MCF 10A (cell line): ENCODE measurements at regions of chr3 and their contacts with region 1.

Region 1: DNA sequence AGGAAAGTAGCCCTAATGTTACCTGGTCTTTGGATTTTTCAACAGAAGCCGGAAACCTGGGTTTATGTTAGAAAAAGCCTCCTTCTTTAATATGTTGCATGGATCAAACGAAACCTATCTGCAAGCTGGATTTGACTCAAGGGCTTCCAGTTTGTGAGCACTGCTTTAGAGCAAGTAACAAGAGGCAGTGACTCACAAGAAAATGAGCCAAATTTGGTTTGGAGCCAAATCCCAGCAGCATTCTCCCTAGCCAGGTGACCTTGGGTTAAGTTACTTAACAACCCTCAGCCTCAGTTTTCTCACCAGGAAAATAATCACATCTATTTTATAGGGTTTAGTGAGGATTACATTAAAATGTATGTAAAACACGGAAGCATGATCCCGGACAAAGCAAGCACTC is 215.2 kb upstream of the PRICKLE2 start:
- DNase-seq: peak; percentile 95
- H3K4me3 Mint-ChIP-seq: no peak overlapping the region
- H3K27ac Mint-ChIP-seq: no peak overlapping the region
- H3K4me1 Mint-ChIP-seq: no peaks in the 10 kb centered on the region
- H3K27me3 Mint-ChIP-seq: peaks cover 12% of the 10 kb centered on the region
- CTCF ChIP-seq: no peak

Region 2: GRCh38 chr3:64462203-64462602 is 21.7 kb after region 1 on chr3:
- CTCF ChIA-PET with region 1: interaction called, 13 read pairs
- POLR2A ChIA-PET with region 1: no interaction called
- intact Hi-C with region 1: no loop called
- DNase-seq: no peak
- H3K4me3 Mint-ChIP-seq: no peak overlapping the region
- H3K27ac Mint-ChIP-seq: no peak overlapping the region
- H3K4me1 Mint-ChIP-seq: no peaks in the 10 kb centered on the region
- H3K27me3 Mint-ChIP-seq: peaks cover 13% of the 10 kb centered on the region
- CTCF ChIP-seq: no peak

Region 3: DNA sequence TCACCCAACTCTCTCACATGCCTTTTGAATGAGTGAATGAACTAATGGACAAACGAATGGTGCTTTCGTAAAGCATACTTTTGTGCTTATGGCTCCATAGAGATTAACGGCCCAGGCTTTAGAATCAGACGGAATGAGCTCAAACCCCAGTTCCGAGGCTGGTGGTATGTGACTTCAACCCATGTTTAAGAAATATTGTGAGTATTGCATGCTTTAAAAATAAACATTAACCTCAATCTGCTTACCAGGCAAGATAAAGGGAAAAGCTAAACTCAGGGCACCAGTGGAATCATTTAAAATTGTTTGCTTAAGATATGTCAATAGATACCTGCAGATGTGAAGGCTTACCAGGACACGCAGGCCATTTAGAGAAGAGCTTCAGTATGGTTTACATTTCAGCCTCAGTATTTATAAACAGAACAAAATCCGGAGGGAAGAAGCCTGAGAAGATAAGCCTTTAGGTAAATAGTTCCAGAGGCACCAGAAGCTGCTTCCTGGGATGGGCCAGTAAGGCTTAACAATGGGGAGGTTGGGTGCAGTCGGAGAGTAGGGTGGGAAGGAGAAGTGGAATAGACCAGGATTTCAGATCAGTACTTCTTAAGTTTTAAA is 60.9 kb after region 1 on chr3:
- CTCF ChIA-PET with region 1: no interaction called
- POLR2A ChIA-PET with region 1: no interaction called
- intact Hi-C with region 1: no loop called
- DNase-seq: no peak
- H3K4me3 Mint-ChIP-seq: no peak overlapping the region
- H3K27ac Mint-ChIP-seq: no peak overlapping the region
- H3K4me1 Mint-ChIP-seq: no peaks in the 10 kb centered on the region
- H3K27me3 Mint-ChIP-seq: no peaks in the 10 kb centered on the region
- CTCF ChIP-seq: no peak